Heart right ventricle (tissue), 16 donors: ENCODE measurements at regions of chr18 and their contacts with region 1.

Region 1: GRCh38 chr18:2797951-2798350 is 48.9 kb upstream of the EMILIN2 start:
- DNase-seq: no peak
- ATAC-seq: no peak
- H3K4me3 ChIP-seq: no peak overlapping the region
- H3K27ac ChIP-seq: no peak overlapping the region
- H3K4me1 ChIP-seq: no peaks in the 10 kb centered on the region
- H3K27me3 ChIP-seq: no peaks in the 10 kb centered on the region
- CTCF ChIP-seq: no peak

Region 2: GRCh38 chr18:2741651-2742050 is 56.3 kb before region 1 on chr18:
- intact Hi-C with region 1: loop called in 1 of 10 experiments (anchors 10 kb)
- DNase-seq: no peak
- ATAC-seq: no peak
- H3K4me3 ChIP-seq: no peak overlapping the region
- H3K27ac ChIP-seq: no peak overlapping the region
- H3K4me1 ChIP-seq: no peaks in the 10 kb centered on the region
- H3K27me3 ChIP-seq: no peaks in the 10 kb centered on the region
- CTCF ChIP-seq: no peak

Region 3: GRCh38 chr18:2869207-2869606 is 71.3 kb after region 1 on chr18:
- intact Hi-C with region 1: no loop called
- DNase-seq: no peak
- ATAC-seq: no peak
- H3K4me3 ChIP-seq: no peak overlapping the region
- H3K27ac ChIP-seq: no peak overlapping the region
- H3K4me1 ChIP-seq: peaks cover 0 to under 1% (median 0%) of the 10 kb centered on the region in 9 donors
- H3K27me3 ChIP-seq: peaks cover 0 to 3% (median 0%) of the 10 kb centered on the region in 7 donors
- CTCF ChIP-seq: no peak